Ovary (tissue), 10 donors: ENCODE measurements at regions of chr9 and their contacts with region 1.

Region 1: DNA sequence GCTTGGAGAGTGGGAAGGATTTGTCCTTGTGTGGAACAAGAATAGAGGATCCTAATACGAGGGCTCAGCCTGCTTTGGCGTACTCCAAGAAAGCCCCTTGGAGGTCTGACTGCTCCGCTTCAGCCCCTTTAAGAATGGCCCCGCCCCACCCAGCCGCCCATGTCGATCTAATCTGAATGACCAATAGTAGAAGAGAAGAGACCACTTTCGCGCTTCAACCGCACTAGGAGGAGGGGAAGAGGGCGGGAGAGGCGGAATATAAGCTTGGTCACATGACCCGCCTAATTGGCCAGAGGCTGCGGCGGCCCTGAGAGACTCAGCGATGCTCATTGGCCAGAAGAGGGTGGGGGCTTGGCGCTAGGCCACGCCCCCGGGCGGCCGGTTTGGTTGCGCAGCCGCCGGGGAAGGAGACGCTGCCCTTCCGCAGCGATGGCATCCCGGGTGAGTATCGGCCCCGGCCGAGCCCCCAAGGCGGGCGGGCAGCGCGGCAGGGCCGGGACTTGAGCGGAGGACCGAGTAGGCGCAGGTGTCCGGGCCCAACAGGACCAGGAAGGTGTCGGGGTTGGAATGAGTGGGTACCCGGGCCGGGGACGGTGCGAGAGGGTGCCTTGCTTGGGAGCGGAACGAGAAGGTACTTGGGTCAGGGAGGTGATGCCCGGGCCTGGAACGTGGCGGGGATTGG is at the start of gene MIGA2:
- DNase-seq: peak; percentile 95 to 98 (median 97)
- H3K4me3 ChIP-seq: peak within 1 kb of the TSS; percentile 97
- H3K27ac ChIP-seq: peak within 1 kb of the TSS in 1 of 2 donors; percentile 54
- H3K4me1 ChIP-seq: peaks cover 12% of the 10 kb centered on the region
- H3K27me3 ChIP-seq: no peaks in the 10 kb centered on the region
- CTCF ChIP-seq: peak in 2 of 3 donors; percentile 8 to 26
- EP300 ChIP-seq: no peak
- POLR2A ChIP-seq: peak; percentile 77
- total RNA-seq, gene MIGA2: 18.7 to 36.5 (median 25.5) TPM

Region 2: GRCh38 chr9:127802576-127803443 is 1233.6 kb before region 1 on chr9 and contains the start of gene FPGS:
- intact Hi-C with region 1: loop called in 1 of 4 experiments (anchors 5 kb)
- DNase-seq: peak; percentile 86 to 89 (median 89)
- H3K4me3 ChIP-seq: peak within 1 kb of the TSS; percentile 73
- H3K27ac ChIP-seq: peak within 1 kb of the TSS; percentile 87 to 97
- H3K4me1 ChIP-seq: peaks cover 18% of the 10 kb centered on the region
- H3K27me3 ChIP-seq: no peaks in the 10 kb centered on the region
- CTCF ChIP-seq: peak in 2 of 3 donors; percentile 5 to 33
- EP300 ChIP-seq: peak; percentile 11
- POLR2A ChIP-seq: peak; percentile 81
- total RNA-seq, gene FPGS: 111 to 209 (median 158) TPM

Region 3: GRCh38 chr9:128987805-128988204 is 48.6 kb before region 1 on chr9:
- intact Hi-C with region 1: no loop called
- DNase-seq: no peak
- H3K4me3 ChIP-seq: no peak overlapping the region
- H3K27ac ChIP-seq: no peak overlapping the region
- H3K4me1 ChIP-seq: no peaks in the 10 kb centered on the region
- H3K27me3 ChIP-seq: no peaks in the 10 kb centered on the region
- CTCF ChIP-seq: no peak
- EP300 ChIP-seq: no peak
- POLR2A ChIP-seq: no peak